ENCODE measurements at regions of chr12 and their contacts with region 1.

Region 1: DNA sequence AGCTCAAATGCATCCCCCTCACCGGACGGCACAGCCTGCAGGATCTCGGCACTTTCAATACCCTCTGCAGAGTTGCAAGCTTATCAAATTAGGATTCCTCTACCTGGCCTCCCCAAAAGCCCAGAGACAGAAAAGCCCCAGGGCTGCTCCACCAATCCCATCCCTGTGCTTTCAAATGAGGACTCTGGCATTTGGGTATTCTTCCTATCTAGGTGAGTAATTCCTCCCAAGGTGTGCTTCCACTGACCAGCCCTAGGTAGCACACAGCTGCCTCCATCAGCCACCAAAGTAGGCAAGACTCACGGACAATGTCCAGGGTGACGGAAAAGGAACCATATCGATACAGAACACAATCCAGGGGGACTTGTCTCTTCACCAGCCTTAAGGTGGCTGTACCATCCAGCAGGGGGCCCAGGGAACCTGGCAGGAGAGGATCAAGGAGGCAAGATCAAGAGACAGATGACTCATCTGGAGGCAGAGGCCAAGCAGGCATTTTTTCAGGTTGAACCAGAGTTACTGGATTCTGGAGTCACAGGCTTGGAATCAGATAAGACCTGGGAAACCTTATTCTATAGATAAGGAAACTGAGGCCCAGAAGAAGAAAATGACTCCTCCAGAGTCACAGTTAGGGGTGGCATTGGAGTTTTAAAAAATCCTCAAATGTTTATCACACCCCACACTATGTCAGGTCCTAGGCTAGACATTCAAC is 9.9 kb downstream of the PMEL start:
- DNase-seq: peak in 4 of 5 donors; percentile 26 to 66 (median 31)
- H3K4me3 ChIP-seq: no peak overlapping the region
- H3K4me3 Mint-ChIP-seq: no peak overlapping the region
- H3K27ac ChIP-seq: no peak overlapping the region
- H3K27ac Mint-ChIP-seq: peak overlapping the region; percentile 30 to 76 (median 69)
- H3K4me1 ChIP-seq: peaks cover 21% of the 10 kb centered on the region
- H3K4me1 Mint-ChIP-seq: peaks cover 13 to 28% (median 19%) of the 10 kb centered on the region in 4 donors
- H3K27me3 ChIP-seq: no peaks in the 10 kb centered on the region
- H3K27me3 Mint-ChIP-seq: no peaks in the 10 kb centered on the region

Region 2: GRCh38 chr12:55932551-55932910 is 23.4 kb before region 1 on chr12:
- CTCF ChIA-PET with region 1: interaction called, 10 read pairs
- POLR2A ChIA-PET with region 1: interaction called, 1,214 read pairs
- intact Hi-C with region 1: no loop called
- DNase-seq: peak; percentile 60 to 80 (median 61)
- H3K4me3 ChIP-seq: peak overlapping the region; percentile 87 to 95
- H3K4me3 Mint-ChIP-seq: peak overlapping the region; percentile 97 to 100 (median 99)
- H3K27ac ChIP-seq: peak overlapping the region; percentile 88
- H3K27ac Mint-ChIP-seq: peak overlapping the region; percentile 93 to 99 (median 95)
- H3K4me1 ChIP-seq: peaks cover 72% of the 10 kb centered on the region
- H3K4me1 Mint-ChIP-seq: peaks cover 46 to 90% (median 56%) of the 10 kb centered on the region in 4 donors
- H3K27me3 ChIP-seq: no peaks in the 10 kb centered on the region
- H3K27me3 Mint-ChIP-seq: no peaks in the 10 kb centered on the region

Region 3: GRCh38 chr12:55940065-55940732 is 15.8 kb before region 1 on chr12:
- CTCF ChIA-PET with region 1: interaction called, 33 read pairs
- POLR2A ChIA-PET with region 1: interaction called, 1,214 read pairs
- intact Hi-C with region 1: no loop called
- DNase-seq: peak; percentile 83 to 86 (median 84)
- H3K4me3 ChIP-seq: peak overlapping the region in 1 of 2 donors; percentile 4
- H3K4me3 Mint-ChIP-seq: peak overlapping the region in 7 of 8 donors; percentile 32 to 76 (median 62)
- H3K27ac ChIP-seq: peak overlapping the region; percentile 48
- H3K27ac Mint-ChIP-seq: peak overlapping the region; percentile 82 to 96 (median 92)
- H3K4me1 ChIP-seq: peaks cover 66% of the 10 kb centered on the region
- H3K4me1 Mint-ChIP-seq: peaks cover 56 to 89% (median 66%) of the 10 kb centered on the region in 4 donors
- H3K27me3 ChIP-seq: no peaks in the 10 kb centered on the region
- H3K27me3 Mint-ChIP-seq: no peaks in the 10 kb centered on the region

Region 4: DNA sequence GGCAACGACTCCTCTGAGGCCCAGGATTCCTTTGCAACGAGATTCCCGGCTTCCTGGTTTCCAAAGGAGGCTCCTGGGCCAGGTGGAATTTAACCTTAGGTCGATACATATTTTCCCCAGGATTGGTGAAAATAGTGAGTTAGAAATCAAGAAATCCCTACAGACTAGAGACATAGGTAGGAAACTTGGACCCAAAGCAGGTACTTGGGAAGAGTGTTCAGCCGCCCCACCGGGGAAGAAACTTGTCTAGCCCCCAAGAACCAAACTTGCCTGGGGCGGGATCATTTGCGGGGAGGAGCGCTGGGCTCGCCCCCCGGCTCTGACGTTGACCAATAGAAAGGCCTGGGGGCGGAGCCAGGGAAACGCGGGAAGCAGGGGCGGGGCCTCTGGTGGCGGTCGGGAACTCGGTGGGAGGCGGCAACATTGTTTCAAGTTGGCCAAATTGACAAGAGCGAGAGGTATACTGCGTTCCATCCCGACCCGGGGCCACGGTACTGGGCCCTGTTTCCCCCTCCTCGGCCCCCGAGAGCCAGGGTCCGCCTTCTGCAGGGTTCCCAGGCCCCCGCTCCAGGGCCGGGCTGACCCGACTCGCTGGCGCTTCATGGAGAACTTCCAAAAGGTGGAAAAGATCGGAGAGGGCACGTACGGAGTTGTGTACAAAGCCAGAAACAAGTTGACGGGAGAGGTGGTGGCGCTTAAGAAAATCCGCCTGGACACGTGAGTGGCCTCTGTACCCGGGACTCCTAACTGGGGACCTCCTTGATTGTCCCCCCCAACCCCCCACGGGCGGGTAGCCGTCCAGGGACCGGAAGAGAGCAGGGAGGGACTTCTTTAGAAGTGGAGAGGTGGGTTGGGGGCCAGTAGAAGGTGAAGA is 10.7 kb after region 1 on chr12 and contains the start of gene CDK2:
- CTCF ChIA-PET with region 1: interaction called, 3 read pairs
- POLR2A ChIA-PET with region 1: interaction called, 55 read pairs
- intact Hi-C with region 1: no loop called
- DNase-seq: peak; percentile 76 to 85 (median 80)
- H3K4me3 ChIP-seq: peak within 1 kb of the TSS; percentile 57 to 77
- H3K4me3 Mint-ChIP-seq: peak within 1 kb of the TSS; percentile 86 to 96 (median 90)
- H3K27ac ChIP-seq: peak within 1 kb of the TSS; percentile 63
- H3K27ac Mint-ChIP-seq: peak within 1 kb of the TSS; percentile 60 to 92 (median 89)
- H3K4me1 ChIP-seq: peaks cover 19% of the 10 kb centered on the region
- H3K4me1 Mint-ChIP-seq: peaks cover 15 to 38% (median 24%) of the 10 kb centered on the region in 4 donors
- H3K27me3 ChIP-seq: no peaks in the 10 kb centered on the region
- H3K27me3 Mint-ChIP-seq: no peaks in the 10 kb centered on the region
- total RNA-seq, gene CDK2: 17.5 to 21.5 TPM

Region 5: DNA sequence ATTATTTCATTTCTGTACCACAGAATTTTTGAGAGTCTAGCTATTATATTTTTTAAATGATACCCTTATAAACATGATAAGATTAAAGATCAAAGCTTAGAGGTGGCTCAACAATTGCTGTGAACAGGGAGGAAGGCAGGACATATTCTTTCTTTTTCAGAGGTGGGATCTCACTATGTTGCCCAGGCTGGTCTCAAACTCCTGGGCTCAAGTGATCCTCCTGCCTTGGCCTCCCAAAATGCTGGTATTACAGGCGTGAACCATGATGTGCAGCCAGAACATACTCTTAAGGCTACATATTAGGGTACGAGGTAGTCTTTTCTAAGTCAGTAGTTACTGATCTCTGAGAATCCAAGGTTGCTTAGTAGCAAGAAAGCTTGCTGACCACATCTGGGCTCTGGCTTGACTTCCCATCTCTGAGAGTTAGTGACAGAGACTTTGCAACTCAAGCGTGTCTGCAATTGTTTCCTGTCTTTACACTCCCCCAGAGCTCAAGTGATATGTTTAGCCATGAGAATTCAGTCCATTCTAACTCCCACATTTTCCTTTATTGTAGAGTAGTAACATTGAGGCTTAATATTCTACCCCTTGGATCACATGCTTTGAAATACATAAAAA is 26.5 kb after region 1 on chr12:
- CTCF ChIA-PET with region 1: no interaction called
- POLR2A ChIA-PET with region 1: interaction called, 12 read pairs
- intact Hi-C with region 1: no loop called
- DNase-seq: no peak
- H3K4me3 ChIP-seq: no peak overlapping the region
- H3K4me3 Mint-ChIP-seq: no peak overlapping the region
- H3K27ac ChIP-seq: no peak overlapping the region
- H3K27ac Mint-ChIP-seq: peak overlapping the region in 3 of 7 donors; percentile 10 to 56 (median 42)
- H3K4me1 ChIP-seq: peaks cover 8% of the 10 kb centered on the region
- H3K4me1 Mint-ChIP-seq: peaks cover 15 to 29% (median 18%) of the 10 kb centered on the region in 4 donors
- H3K27me3 ChIP-seq: no peaks in the 10 kb centered on the region
- H3K27me3 Mint-ChIP-seq: no peaks in the 10 kb centered on the region